CD4-positive, alpha-beta memory T cell (primary cell): ENCODE measurements at regions of chr3 and their contacts with region 1.

Region 1: GRCh38 chr3:146469150-146470017 is at the start of gene PLSCR2:
- DNase-seq: peak; percentile 70 to 76 (median 71)
- H3K4me3 ChIP-seq: peak within 1 kb of the TSS; percentile 60 to 75
- H3K4me3 Mint-ChIP-seq: peak within 1 kb of the TSS; percentile 82 to 86 (median 84)
- H3K27ac ChIP-seq: peak within 1 kb of the TSS; percentile 33
- H3K27ac Mint-ChIP-seq: peak within 1 kb of the TSS; percentile 54 to 85 (median 76)
- H3K4me1 ChIP-seq: peaks cover 13% of the 10 kb centered on the region
- H3K4me1 Mint-ChIP-seq: peaks cover 0 to 14% (median 6%) of the 10 kb centered on the region in 4 donors
- H3K27me3 ChIP-seq: no peaks in the 10 kb centered on the region
- H3K27me3 Mint-ChIP-seq: peaks cover 0 to 4% of the 10 kb centered on the region in 2 donors
- total RNA-seq, gene PLSCR2: 0.72 to 0.76 TPM

Region 2: GRCh38 chr3:145692751-145693150 is 776.6 kb before region 1 on chr3:
- CTCF ChIA-PET with region 1: no interaction called
- POLR2A ChIA-PET with region 1: no interaction called
- intact Hi-C with region 1: no loop called
- DNase-seq: no peak
- H3K4me3 ChIP-seq: no peak overlapping the region
- H3K4me3 Mint-ChIP-seq: no peak overlapping the region
- H3K27ac ChIP-seq: no peak overlapping the region
- H3K27ac Mint-ChIP-seq: no peak overlapping the region
- H3K4me1 ChIP-seq: no peaks in the 10 kb centered on the region
- H3K4me1 Mint-ChIP-seq: no peaks in the 10 kb centered on the region
- H3K27me3 ChIP-seq: no peaks in the 10 kb centered on the region
- H3K27me3 Mint-ChIP-seq: no peaks in the 10 kb centered on the region

Region 3: GRCh38 chr3:146404436-146404835 is 64.9 kb before region 1 on chr3:
- CTCF ChIA-PET with region 1: no interaction called
- POLR2A ChIA-PET with region 1: no interaction called
- intact Hi-C with region 1: no loop called
- DNase-seq: no peak
- H3K4me3 ChIP-seq: no peak overlapping the region
- H3K4me3 Mint-ChIP-seq: no peak overlapping the region
- H3K27ac ChIP-seq: no peak overlapping the region
- H3K27ac Mint-ChIP-seq: no peak overlapping the region
- H3K4me1 ChIP-seq: no peaks in the 10 kb centered on the region
- H3K4me1 Mint-ChIP-seq: no peaks in the 10 kb centered on the region
- H3K27me3 ChIP-seq: no peaks in the 10 kb centered on the region
- H3K27me3 Mint-ChIP-seq: peaks cover 0 to 3% of the 10 kb centered on the region in 2 donors

Region 4: DNA sequence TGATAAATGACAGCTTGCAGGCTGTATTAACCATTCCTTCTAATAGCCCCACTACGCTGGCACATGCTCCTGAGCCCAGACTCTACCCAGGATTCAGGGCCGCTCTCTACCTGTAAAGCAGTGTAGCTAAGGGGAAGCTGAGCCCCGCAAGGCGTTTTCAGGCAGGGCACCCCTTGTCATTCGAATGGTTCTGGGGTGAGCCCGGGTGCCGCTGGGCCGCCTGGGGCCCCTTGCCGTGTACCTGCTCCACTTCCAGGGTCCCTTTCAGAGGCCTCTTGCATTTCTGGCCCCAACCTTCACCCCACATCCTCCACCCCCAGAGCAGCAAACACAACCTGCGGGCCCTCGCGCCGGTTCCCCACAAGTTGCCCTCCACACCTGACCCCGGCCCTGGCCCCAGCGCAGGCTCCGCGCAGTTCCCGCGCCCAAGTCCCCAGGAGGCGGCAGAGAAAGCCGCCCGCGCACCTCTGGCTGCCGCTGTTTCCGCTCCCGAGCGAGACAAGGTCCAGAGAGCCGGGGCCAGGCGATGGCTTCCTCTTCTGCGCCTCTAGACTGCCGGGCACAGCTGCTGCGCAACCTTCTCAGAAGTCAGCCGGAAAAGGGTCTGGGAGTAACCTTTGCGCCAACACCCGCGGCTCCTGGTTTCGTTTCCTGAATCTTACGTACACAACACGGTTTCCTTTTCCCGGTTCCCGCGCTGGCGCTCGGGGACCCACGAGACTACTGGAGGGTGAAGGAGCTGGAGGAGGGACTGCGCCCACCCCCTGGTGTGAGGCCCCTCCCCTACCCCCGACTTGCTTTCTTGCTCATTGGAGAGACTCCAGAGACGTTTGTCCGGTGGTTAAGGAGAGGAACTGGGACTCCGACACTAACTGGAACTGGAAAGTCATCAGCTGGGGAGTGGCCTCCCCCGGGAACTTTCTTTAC is 74.9 kb after region 1 on chr3 and contains the start of gene PLSCR1:
- CTCF ChIA-PET with region 1: interaction called, 3 read pairs
- POLR2A ChIA-PET with region 1: interaction called, 4 read pairs
- intact Hi-C with region 1: loop called (anchors 2 kb)
- DNase-seq: peak; percentile 56 to 64 (median 63)
- H3K4me3 ChIP-seq: peak within 1 kb of the TSS; percentile 75 to 77
- H3K4me3 Mint-ChIP-seq: peak within 1 kb of the TSS; percentile 93 to 95 (median 94)
- H3K27ac ChIP-seq: peak within 1 kb of the TSS; percentile 50
- H3K27ac Mint-ChIP-seq: peak within 1 kb of the TSS; percentile 79 to 93 (median 88)
- H3K4me1 ChIP-seq: peaks cover 42% of the 10 kb centered on the region
- H3K4me1 Mint-ChIP-seq: peaks cover 37 to 71% (median 57%) of the 10 kb centered on the region in 4 donors
- H3K27me3 ChIP-seq: no peaks in the 10 kb centered on the region
- H3K27me3 Mint-ChIP-seq: no peaks in the 10 kb centered on the region
- total RNA-seq, gene PLSCR1: 24.9 to 25.0 TPM